Mammary epithelial cell (primary cell): ENCODE measurements at regions of chr19 and their contacts with region 1.

Region 1: DNA sequence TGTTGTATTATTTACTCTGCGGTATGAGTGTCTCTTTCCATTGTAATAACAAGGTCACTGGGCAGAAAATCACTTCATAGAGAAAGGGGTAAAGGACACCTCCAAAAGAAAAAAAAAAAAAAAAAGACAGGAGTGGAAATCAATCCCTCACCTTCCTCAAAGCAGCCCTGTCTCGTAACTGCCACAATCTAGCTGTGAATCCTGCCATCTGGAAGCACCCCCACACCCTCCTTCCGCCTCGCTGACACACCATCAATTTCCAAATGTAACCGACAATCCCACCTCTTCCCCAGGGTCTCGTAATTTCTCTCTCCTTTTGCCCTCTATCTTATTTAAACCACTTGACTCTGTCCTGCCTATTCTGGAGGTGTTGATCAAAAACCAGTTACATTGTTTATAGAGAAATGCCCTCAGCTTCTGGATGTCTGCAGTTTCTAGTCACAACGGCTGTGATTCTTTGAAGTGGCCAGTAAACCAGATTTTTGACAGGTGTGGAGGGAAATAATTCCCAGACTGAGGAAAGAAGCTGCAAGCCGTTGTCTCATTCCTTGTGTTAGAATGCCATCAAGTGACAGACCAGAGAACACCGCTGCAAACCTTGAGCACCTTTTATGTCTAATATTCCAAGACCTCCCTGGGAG is 9.1 kb upstream of the POP4 start:
- DNase-seq: no peak
- H3K4me3 ChIP-seq: no peak overlapping the region
- H3K27ac ChIP-seq: no peak overlapping the region
- H3K4me1 ChIP-seq: no peaks in the 10 kb centered on the region
- H3K27me3 ChIP-seq: peaks cover 2% of the 10 kb centered on the region
- CTCF ChIP-seq: peak; percentile 37 to 49

Region 2: DNA sequence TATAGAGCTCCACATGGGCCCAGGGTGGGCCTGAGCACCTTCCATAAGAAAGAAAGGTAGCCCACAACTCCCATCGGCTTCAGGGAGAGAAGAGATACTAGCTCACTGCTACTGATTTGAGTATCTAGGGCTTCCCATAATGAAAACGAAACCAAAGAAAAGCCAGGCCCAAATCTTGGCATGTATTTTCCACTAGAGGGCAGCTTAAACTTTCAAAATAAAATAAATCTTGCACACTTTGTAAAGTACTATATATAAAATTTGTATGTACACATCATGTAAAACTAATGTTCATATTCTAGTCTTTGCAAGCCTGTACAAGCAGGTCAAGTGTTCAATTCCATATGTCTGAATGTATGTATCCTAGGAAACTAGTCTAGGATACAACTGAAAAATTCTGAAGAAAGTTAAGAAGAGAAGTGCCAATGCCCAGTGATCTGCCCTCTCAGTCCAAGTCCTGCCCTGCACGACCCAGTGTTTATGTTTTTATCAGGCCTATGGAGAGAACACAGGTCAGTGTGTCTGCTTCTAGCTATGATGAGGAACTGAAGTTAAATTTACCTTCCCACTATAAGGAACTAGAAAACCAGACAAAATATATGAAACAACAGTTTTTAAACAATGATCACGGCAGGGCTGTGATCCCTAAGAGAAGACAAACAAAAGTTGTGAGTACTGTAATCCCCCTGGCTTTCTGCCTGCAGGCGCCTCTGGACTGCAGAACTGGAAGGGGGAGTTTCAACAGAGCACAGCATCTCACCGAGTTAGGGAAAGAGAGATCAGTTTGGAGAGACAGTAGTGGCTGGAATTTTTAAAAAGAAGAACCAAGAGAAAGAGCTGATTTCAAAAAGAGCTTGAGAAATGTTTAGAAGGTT is 859.7 kb before region 1 on chr19:
- CTCF ChIA-PET with region 1: no interaction called
- dilution Hi-C with region 1: no loop called
- in situ Hi-C with region 1: no loop called
- intact Hi-C with region 1: loop called (anchors 2 kb)
- DNase-seq: peak; percentile 28
- H3K4me3 ChIP-seq: no peak overlapping the region
- H3K27ac ChIP-seq: no peak overlapping the region
- H3K4me1 ChIP-seq: no peaks in the 10 kb centered on the region
- H3K27me3 ChIP-seq: no peaks in the 10 kb centered on the region
- CTCF ChIP-seq: peak; percentile 45 to 51

Region 3: GRCh38 chr19:29514525-29515232 is 82.3 kb before region 1 on chr19:
- CTCF ChIA-PET with region 1: no interaction called
- dilution Hi-C with region 1: no loop called
- in situ Hi-C with region 1: no loop called
- intact Hi-C with region 1: no loop called
- DNase-seq: no peak
- H3K4me3 ChIP-seq: no peak overlapping the region
- H3K27ac ChIP-seq: no peak overlapping the region
- H3K4me1 ChIP-seq: no peaks in the 10 kb centered on the region
- H3K27me3 ChIP-seq: no peaks in the 10 kb centered on the region
- CTCF ChIP-seq: no peak

Region 4: DNA sequence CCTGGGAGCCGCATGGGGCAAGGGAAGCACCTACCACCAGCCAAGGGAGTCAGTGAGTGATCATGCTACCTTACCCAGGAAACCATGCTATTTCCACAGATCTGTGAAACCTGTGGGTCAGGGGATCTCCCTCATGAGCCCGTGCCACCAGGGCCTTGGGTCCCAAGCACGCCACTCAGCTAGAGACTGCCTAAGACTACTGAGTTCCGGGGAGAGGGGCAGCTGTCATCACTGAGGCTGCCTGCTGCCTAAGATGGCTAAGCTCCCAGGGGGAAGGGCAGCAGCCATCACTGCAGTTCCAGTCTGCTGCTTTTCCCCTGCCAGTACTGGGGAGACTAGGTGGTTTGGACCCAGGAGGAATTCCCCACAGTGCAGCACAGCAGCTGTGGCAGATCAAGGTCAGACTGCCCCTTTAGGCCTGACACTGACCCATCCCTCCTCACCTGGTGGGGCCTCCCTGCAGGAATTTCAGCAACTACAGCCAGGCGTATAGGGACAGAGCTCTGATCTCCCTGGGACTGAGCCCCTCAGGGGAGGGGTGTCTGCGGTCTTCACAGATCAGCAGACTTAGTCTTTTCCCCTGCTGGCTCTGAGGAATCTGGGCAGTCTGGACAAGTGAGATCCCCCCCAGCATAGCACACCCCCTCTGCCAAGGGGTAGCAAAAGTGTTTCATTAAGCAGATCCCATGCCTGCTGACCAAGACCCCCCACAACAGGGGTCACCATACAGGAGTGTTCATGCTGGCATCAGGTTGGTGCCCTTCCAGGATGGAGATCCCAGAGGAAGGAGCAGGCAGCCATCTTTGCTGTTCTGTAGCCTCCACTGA is 44.3 kb before region 1 on chr19:
- CTCF ChIA-PET with region 1: no interaction called
- dilution Hi-C with region 1: no loop called
- in situ Hi-C with region 1: no loop called
- intact Hi-C with region 1: no loop called
- DNase-seq: no peak
- H3K4me3 ChIP-seq: no peak overlapping the region
- H3K27ac ChIP-seq: no peak overlapping the region
- H3K4me1 ChIP-seq: no peaks in the 10 kb centered on the region
- H3K27me3 ChIP-seq: no peaks in the 10 kb centered on the region
- CTCF ChIP-seq: no peak

Region 5: GRCh38 chr19:29858000-29858596 is 261.1 kb after region 1 on chr19:
- CTCF ChIA-PET with region 1: no interaction called
- dilution Hi-C with region 1: loop called (anchors 10 kb)
- in situ Hi-C with region 1: no loop called
- intact Hi-C with region 1: no loop called
- DNase-seq: no peak
- H3K4me3 ChIP-seq: no peak overlapping the region
- H3K27ac ChIP-seq: no peak overlapping the region
- H3K4me1 ChIP-seq: no peaks in the 10 kb centered on the region
- H3K27me3 ChIP-seq: no peaks in the 10 kb centered on the region
- CTCF ChIP-seq: peak; percentile 59 to 83